ENCODE measurements at regions of chr17 and their contacts with region 1.

Region 1: DNA sequence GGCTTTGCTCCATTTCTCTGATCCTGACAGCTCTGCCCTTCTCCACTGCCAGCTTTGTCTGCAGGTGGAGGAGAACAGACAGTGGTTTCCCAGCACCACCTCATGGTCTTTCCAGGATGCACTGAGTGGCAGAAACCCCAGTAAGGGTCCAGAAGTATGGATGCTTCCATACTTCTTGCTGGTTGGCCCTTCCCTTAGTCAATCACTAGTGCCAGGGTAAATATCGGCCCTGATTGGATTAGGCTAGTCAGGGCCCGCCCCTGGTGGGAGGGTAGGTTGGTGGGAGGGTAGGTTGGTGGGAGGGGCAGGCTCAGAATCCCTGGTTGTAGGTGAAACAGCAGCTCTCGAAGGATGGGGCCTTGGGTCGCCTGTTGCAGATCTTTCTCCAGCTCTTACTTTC is 10.2 kb downstream of the RNF213 start:
- DNase-seq: peak; percentile 82
- ATAC-seq: peak; percentile 98
- H3K4me3 Mint-ChIP-seq: peak overlapping the region; percentile 38
- H3K27ac Mint-ChIP-seq: peak overlapping the region; percentile 86
- H3K4me1 Mint-ChIP-seq: peaks cover 12% of the 10 kb centered on the region; the same call in 1 of the 2 replicates
- H3K27me3 Mint-ChIP-seq: no peaks in the 10 kb centered on the region
- CTCF ChIP-seq: no peak

Region 2: DNA sequence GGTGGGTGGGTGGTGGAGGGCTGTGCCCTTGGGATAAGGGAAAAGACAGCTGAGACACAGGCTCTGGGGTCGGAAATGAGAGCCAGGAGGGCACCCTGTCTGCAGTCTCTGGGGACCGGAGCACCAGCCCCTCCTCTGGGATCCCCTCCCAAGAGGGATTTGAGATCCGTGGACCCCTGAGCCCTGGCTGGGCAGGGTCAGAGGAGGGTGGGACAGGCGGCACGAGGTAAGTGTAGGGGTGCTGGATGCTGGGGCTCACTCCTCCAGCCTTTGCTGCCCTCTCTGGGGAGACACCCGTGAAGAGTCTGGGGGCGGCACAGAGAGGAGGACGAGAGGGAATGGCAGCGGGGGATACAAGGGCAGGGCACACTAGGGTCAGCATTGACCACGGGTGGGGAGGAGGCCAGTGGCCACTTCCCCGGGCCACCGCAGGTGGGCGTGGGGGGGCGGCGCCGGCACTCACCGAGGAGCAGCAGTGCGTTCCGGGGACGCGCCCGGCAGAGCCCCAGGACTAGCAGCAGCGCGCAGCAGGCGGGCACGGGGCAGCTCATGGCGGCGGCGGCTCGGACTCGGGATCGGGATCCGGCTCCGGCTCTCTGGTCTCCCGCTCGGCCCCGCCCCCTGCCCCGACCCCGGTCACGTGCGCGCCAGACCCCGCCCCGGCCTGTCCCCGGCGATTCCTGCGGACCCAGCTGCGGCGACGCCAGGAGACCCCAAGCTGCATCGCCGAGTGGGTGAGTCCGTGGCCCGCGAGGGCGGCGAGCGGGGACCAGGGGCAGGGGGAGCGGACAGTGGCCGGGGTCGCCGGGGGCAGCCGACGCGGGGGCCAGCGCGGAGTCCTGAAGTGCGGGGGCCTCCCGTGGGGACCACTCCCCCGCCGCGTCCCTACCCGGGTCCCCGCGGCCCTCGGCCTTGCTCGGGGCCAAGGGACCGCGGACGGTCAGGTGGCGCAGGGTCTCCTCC is 50.8 kb before region 1 on chr17 and contains the starts of genes SGSH and SLC26A11:
- CTCF ChIA-PET with region 1: no interaction called
- POLR2A ChIA-PET with region 1: no interaction called
- DNase-seq: peak; percentile 91
- ATAC-seq: peak; percentile 84
- H3K4me3 Mint-ChIP-seq: peak within 1 kb of the TSS; percentile 91
- H3K27ac Mint-ChIP-seq: peak within 1 kb of the TSS; percentile 63; the same call in 1 of the 2 replicates
- H3K4me1 Mint-ChIP-seq: peaks cover 17% of the 10 kb centered on the region
- H3K27me3 Mint-ChIP-seq: no peaks in the 10 kb centered on the region
- CTCF ChIP-seq: no peak
- total RNA-seq, gene SGSH: 22.0 to 27.7 TPM (median 22.0 TPM) in 3 replicates
- total RNA-seq, gene SLC26A11: 19.1 to 26.4 TPM (median 23.5 TPM) in 3 replicates

Region 3: GRCh38 chr17:80284631-80285030 is 13.8 kb after region 1 on chr17:
- CTCF ChIA-PET with region 1: interaction called, 10 read pairs
- POLR2A ChIA-PET with region 1: no interaction called
- DNase-seq: peak; percentile 65
- ATAC-seq: peak; percentile 76
- H3K4me3 Mint-ChIP-seq: no peak overlapping the region
- H3K27ac Mint-ChIP-seq: peak overlapping the region; percentile 39
- H3K4me1 Mint-ChIP-seq: peaks cover 12% of the 10 kb centered on the region
- H3K27me3 Mint-ChIP-seq: no peaks in the 10 kb centered on the region
- CTCF ChIP-seq: no peak

Region 4: GRCh38 chr17:80297996-80298560 is 27.2 kb after region 1 on chr17:
- CTCF ChIA-PET with region 1: no interaction called
- POLR2A ChIA-PET with region 1: no interaction called
- DNase-seq: no peak
- ATAC-seq: no peak
- H3K4me3 Mint-ChIP-seq: no peak overlapping the region
- H3K27ac Mint-ChIP-seq: no peak overlapping the region
- H3K4me1 Mint-ChIP-seq: no peaks in the 10 kb centered on the region
- H3K27me3 Mint-ChIP-seq: no peaks in the 10 kb centered on the region
- CTCF ChIP-seq: no peak